Stomach (tissue), 19 donors: ENCODE measurements at regions of chr2 and their contacts with region 1.

Region 1: GRCh38 chr2:240056678-240057077 is 3.4 kb upstream of the OR6B3 start:
- DNase-seq: no peak
- H3K4me3 ChIP-seq: no peak overlapping the region
- H3K27ac ChIP-seq: no peak overlapping the region
- H3K4me1 ChIP-seq: no peaks in the 10 kb centered on the region
- H3K27me3 ChIP-seq: peaks cover 11 to 62% (median 41%) of the 10 kb centered on the region in 3 donors
- CTCF ChIP-seq: no peak
- EP300 ChIP-seq: no peak
- POLR2A ChIP-seq: no peak

Region 2: GRCh38 chr2:238802957-238803356 is 1253.7 kb before region 1 on chr2:
- intact Hi-C with region 1: no loop called
- DNase-seq: no peak
- H3K4me3 ChIP-seq: no peak overlapping the region
- H3K27ac ChIP-seq: no peak overlapping the region
- H3K4me1 ChIP-seq: no peaks in the 10 kb centered on the region
- H3K27me3 ChIP-seq: peaks cover 0 to 30% (median 8%) of the 10 kb centered on the region in 3 donors
- CTCF ChIP-seq: no peak
- EP300 ChIP-seq: no peak
- POLR2A ChIP-seq: no peak

Region 3: DNA sequence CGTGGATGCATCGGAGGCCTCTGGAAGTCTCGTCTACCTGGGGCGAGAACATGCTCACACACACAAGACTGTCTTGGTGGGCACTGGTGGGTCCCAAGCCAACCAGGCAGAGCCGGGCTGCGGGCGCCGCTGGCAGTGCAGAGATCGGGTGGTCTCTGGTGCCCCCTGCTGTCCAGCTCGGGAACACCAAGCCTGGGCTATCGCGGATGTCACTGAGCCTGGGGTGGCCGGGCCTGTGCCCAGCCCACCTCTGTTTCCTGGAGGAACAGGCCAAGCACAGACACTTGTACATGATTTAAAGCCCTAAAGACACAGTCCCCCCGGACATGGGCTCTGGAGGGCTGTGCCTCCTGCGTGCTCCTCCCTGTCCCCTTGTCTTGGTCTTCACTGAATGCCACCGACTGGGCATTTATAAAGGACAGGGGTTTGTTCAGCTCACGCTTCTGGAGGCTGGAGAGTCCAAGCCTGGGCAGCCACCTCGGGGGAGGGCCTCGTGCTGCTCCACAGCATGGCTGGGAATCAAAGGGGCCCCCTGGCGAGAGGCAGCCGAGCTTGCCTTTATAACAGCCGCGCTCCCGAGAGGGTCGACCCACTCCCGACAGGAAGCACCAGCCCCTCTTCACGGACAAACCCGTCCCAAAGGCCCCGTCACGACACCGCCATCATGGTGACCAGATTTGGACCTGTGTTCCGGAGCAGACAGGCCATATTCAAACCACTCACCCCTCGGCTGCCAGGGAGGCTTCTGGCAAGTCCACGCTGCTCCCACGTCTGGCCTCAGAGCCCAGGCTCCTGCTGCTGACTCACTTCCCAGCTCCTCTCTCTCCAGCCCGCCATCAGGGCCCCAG is 87.3 kb after region 1 on chr2:
- intact Hi-C with region 1: loop called (anchors 5 kb)
- DNase-seq: peak; percentile 73 to 87
- H3K4me3 ChIP-seq: no peak overlapping the region
- H3K27ac ChIP-seq: no peak overlapping the region
- H3K4me1 ChIP-seq: peaks cover 0 to 7% (median 6%) of the 10 kb centered on the region in 4 donors
- H3K27me3 ChIP-seq: peaks cover 0 to 58% (median 34%) of the 10 kb centered on the region in 3 donors
- CTCF ChIP-seq: peak in 5 of 7 experiments; percentile 65 to 96 (median 93)
- EP300 ChIP-seq: no peak
- POLR2A ChIP-seq: no peak